ENCODE measurements at regions of chr17 and their contacts with region 1.

Region 1: GRCh38 chr17:64420143-64420971 is 28.6 kb upstream of the MILR1 start:
- DNase-seq: no peak
- ATAC-seq: peak; percentile 66 to 76
- H3K4me3 ChIP-seq: no peak overlapping the region
- H3K27ac ChIP-seq: no peak overlapping the region
- H3K4me1 ChIP-seq: no peaks in the 10 kb centered on the region
- H3K27me3 ChIP-seq: no peaks in the 10 kb centered on the region

Region 2: DNA sequence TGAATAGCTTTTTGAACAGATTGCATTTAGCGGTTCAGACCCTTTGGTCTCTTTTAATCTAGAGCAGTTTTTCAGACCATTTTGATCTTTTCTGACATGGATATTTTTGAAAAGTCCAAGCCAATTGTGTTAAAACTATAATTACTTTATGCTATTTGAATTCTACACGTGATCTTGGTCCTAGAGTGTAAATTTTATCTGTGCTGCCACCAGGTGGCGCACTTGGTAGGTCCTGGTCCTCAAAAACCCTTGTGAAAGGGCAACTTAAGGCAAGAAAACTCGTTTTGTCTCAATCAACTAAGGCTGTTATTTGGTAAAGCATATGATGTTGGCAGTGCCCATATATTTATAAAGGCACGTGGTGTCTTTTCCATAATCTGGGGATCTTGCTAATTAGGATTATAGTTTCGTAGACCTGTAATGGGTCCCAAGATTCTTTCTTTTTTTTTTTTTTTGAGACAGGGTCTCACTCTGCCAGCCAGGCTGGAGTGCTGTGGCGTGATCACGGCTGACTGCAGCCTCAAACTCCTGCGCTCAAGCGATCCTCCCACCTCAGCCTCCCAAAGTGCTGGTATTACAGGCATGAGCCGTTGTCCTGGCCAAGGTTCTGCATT is 113.4 kb before region 1 on chr17:
- intact Hi-C with region 1: loop called in 3 of 4 experiments (anchors 5 kb)
- DNase-seq: peak; percentile 71 to 88 (median 80)
- ATAC-seq: peak; percentile 38 to 57
- H3K4me3 ChIP-seq: no peak overlapping the region
- H3K27ac ChIP-seq: no peak overlapping the region
- H3K4me1 ChIP-seq: no peaks in the 10 kb centered on the region
- H3K27me3 ChIP-seq: no peaks in the 10 kb centered on the region

Region 3: DNA sequence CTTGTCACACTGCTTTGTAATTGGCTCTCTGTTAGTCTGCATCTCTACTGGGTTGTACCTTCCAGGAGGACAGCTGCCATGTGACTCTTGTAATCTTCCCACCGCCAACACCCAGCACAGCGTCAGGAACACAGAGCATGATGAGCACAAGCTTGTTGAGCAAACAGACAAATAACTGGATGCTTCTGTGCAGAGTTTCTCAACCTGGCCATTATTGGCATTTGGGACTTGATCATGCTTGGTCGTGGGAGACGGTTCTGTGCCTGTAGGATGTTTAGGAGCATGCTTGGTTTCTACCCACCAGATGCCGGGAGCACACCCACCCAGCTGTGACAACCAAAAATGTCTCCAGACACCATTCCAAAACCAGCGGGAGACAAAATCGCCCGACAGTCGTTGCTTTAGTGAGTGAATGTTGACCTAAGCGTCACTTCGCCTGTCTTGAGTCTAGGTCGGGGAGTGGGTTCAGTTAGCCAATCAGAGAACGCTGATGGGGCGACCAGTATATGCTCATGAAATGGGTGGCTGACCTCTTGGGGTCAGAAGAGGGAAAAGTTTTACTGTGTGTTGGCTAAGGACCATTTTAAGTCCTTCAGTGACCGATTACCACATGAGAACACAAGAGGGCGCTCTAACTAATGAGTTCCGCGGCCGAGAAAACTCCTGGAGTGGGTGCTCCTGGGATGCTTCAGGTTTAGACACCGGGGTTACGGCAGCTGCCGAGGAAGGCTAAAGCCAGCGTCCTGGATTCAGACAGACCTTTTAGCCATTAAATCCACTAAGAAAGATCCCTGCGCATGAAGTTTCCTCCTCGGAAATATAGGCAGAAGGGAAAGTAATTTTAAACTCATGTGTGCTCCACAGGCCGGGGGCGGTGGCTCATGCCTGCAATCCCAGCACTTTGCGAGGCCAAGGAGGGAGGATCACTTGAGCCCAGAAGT is 99.5 kb before region 1 on chr17:
- intact Hi-C with region 1: loop called in 3 of 4 experiments (anchors 5 kb)
- DNase-seq: peak in 2 of 3 donors; percentile 62 to 67
- ATAC-seq: peak; percentile 50 to 64
- H3K4me3 ChIP-seq: no peak overlapping the region
- H3K27ac ChIP-seq: no peak overlapping the region
- H3K4me1 ChIP-seq: peaks cover 4% of the 10 kb centered on the region
- H3K27me3 ChIP-seq: no peaks in the 10 kb centered on the region

Region 4: DNA sequence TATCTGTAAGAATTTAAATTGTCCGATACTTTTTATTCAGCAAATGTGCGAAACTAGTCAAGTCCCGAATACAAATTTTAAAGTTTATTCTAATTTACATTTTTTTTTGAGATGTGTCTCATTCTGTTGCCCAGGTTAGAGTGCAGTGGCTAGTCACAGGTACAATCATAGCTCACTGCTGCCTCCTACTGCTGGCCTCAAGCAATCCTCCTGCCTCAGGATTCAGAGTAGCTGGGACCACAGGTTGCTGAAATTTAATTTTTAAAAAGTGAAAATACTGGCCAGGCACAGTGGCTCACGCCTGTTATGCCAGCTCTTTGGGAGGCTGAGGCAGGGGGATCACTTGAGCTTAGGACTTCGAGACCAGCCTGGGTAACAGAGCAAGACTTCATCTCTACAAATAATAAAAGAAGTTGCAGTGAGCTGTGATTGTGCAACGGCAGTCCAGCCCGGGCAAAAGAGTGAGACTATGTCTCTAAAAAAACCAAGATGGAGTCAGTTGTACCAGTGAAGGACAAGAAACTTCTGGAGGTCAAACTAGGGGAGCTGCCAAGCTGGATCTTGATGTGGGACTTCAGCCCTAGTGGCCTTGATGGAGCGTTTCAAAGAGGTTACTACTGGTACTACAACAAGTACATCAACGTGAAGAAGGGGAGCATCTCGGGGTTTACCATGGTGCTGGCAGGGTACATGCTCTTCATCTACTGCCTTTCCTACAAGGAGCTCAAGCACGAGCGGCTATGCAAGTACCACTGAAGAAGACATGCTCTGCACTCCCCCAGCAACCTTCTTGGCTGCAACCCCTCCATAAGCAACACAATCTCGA is 70.9 kb after region 1 on chr17:
- intact Hi-C with region 1: loop called in 3 of 4 experiments (anchors 5 kb)
- DNase-seq: peak in 1 of 3 donors; percentile 57
- ATAC-seq: peak; percentile 44 to 56
- H3K4me3 ChIP-seq: no peak overlapping the region
- H3K27ac ChIP-seq: no peak overlapping the region
- H3K4me1 ChIP-seq: no peaks in the 10 kb centered on the region
- H3K27me3 ChIP-seq: no peaks in the 10 kb centered on the region

Region 5: GRCh38 chr17:64950871-64951270 is 530.5 kb after region 1 on chr17:
- intact Hi-C with region 1: no loop called
- DNase-seq: no peak
- ATAC-seq: no peak
- H3K4me3 ChIP-seq: no peak overlapping the region
- H3K27ac ChIP-seq: no peak overlapping the region
- H3K4me1 ChIP-seq: no peaks in the 10 kb centered on the region
- H3K27me3 ChIP-seq: no peaks in the 10 kb centered on the region

Measured in right cardiac atrium (tissue), 5 donors.